Activated T-helper 1 cell treated with anti-CD3 and anti-CD28 coated beads, Interleukin-12 subunit alpha, Interleukin-12 subunit beta, Interleukin-2, Interleukin-4 antibody, amounts not matched to agents 30 ng/mL and 10 ng/mL and 1 ng/mL, durations not matched to agents 14 hours and 24 hours and 36 hours (primary cell): ENCODE measurements at regions of chr17 and their contacts with region 1.

Region 1: DNA sequence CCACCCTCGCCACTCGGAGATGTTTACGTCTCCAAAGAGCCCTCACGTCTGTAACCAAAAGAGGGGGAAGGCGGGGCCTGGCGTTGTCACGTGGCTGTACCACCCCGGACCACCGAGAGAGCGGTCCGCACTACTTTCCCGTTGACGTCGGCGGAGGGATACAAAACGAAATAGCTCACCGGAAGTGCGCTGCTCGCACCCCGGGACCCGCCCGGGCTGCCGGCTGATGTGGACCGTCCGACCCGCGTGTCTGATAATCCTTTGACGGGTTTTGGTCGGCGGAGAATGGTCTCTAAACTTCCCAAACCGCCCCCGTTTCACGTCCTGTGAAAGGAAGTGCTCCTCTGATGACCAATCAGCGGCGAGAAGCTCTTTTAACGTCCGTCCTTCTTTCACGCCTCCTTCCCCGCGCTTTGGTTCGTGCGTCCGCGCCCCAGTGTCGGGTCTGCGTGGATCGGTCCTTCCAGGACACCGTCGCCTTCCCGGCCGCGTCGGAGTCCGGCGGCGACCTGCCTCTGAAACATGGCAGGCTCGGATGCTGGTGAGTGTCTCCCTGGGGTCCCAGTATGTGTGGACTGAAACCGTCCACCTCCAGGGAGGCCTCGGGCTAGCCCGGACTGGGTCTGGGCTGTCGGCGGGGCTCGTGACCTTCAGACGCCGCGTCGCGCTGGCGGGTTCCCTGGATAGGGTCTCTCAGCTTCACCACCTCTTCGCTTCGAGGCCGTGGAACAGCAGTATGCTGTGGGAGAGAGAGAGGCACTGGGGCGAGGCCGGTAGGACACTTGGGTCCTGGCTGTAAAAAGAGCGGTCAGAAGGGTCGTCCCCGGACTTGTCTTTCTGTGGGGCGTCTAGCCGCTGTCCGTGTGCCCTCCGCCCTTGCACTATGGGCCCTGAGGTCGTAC is at the start of gene CEP95:
- DNase-seq: peak; percentile 93
- H3K4me3 Mint-ChIP-seq: peak within 1 kb of the TSS; percentile 97
- H3K27ac Mint-ChIP-seq: peak within 1 kb of the TSS; percentile 99
- H3K4me1 Mint-ChIP-seq: peaks cover 48% of the 10 kb centered on the region
- H3K27me3 Mint-ChIP-seq: no peaks in the 10 kb centered on the region
- total RNA-seq, gene CEP95: 42.4 and 46.4 TPM in 2 replicates

Region 2: DNA sequence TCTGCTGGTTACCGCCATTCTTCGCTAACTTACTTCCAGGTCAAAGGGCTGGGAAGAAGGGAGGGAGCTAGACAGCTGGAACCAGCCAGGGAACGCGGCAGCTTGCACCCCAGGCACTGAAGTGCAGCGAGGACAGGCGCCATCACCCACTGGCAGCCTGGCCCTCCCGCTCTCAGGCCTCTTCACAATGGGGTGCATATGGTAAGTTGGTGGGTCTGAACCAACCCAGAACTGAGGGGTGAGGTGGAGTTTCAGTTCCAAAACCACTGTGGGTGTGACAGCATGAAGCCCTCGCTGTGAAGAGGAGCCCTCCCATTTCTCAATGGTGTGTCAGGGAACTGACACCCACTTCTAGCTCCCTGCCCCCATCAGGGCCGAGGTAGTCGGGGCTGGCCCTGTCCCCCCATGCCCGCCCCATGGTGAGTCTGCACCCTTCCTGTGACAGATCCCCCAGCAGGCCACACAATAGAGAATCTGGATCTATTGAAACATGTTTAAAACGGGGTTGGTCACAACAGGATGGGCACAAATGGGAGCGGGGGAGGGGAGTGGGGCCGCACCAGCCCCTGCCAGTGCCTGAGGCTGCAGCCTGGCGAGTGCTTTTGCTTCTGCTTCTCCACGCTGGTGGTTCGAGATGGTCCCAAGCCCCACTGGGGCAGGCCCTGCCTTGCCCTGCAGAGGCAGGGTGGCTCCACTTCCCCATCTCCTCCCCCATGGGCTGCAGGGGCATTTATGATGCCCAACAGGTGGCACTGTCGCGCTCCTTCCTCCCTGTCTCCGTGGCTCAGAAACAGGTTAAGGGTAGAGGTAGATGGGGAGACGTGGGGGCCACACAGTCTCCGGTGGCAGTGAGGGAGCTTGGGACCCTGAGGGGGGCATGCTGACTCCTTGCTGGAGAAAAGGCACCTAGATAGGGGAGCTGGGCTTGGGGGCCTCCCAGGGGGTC is 809.2 kb before region 1 on chr17:
- intact Hi-C with region 1: loop called (anchors 2 kb)
- DNase-seq: peak; percentile 76
- H3K4me3 Mint-ChIP-seq: peak overlapping the region; percentile 96
- H3K27ac Mint-ChIP-seq: peak overlapping the region; percentile 96
- H3K4me1 Mint-ChIP-seq: peaks cover 53% of the 10 kb centered on the region
- H3K27me3 Mint-ChIP-seq: no peaks in the 10 kb centered on the region

Region 3: GRCh38 chr17:63842540-63843386 is 664.1 kb before region 1 on chr17 and contains the start of gene SMARCD2:
- intact Hi-C with region 1: loop called (anchors 2 kb)
- DNase-seq: peak; percentile 98
- H3K4me3 Mint-ChIP-seq: peak within 1 kb of the TSS; percentile 96
- H3K27ac Mint-ChIP-seq: peak within 1 kb of the TSS; percentile 91
- H3K4me1 Mint-ChIP-seq: peaks cover 39% of the 10 kb centered on the region
- H3K27me3 Mint-ChIP-seq: no peaks in the 10 kb centered on the region
- total RNA-seq, gene SMARCD2: 116 TPM in 2 replicates

Region 4: DNA sequence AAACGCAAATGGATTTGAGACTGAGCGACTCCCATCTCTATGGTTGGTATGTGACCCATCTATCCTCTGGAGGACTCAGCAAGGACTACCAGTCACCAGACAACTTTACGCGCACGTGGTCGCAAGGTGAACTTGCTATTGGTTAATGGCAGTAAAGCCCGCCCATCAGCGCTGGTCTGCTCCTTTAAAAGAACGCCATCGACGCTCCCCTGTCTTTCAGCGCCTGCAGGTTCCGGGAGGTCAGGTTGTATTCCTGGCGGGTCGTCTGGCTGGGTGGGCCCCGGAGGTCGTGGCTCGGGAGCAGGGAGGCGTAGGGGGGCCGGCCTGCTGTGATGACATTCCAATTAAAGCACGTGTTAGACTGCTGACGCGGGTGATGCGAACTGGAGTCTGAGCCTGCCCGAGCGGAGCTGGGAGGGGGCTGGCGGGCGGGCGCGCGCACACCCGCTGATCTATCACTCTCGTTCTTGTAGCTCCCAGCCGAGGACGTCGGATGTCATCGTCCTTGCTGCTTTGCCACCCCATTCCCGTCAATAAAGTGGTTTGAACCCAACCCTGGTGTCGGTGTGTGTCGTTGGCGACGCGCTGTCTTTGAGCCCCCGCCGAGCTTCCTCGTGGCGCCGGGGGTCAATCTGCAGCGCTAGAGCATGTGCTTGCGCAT is 360.9 kb before region 1 on chr17:
- intact Hi-C with region 1: loop called (anchors 5 kb)
- DNase-seq: peak; percentile 93
- H3K4me3 Mint-ChIP-seq: no peak overlapping the region
- H3K27ac Mint-ChIP-seq: no peak overlapping the region
- H3K4me1 Mint-ChIP-seq: peaks cover 19% of the 10 kb centered on the region
- H3K27me3 Mint-ChIP-seq: peaks cover 2% of the 10 kb centered on the region

Region 5: DNA sequence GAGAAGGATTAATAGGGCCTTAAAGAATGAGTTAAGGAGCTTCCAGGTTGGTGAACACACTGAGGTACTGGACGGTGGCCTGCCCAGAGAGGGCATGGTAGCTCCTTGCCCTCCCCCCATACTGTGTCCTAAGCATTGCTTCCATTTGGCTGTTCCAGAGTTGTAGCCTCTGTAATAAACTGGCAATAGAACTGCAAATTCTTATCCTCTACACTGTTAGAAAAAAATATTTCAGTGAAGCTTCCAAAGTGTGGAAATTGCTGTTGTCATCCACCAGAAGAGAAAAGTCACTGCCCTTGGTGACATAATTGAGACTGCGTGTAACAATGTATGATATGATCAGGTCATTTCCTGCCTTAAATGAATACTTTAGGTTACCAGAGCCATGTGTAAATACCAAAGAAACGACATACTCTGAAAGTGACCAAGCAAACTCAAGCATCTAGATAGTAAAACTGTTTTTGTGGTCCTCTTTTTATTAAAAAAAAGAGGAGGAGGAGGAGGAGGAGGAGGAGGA is 65.9 kb after region 1 on chr17:
- intact Hi-C with region 1: loop called (anchors 2 kb)
- DNase-seq: peak; percentile 3
- H3K4me3 Mint-ChIP-seq: peak overlapping the region; percentile 40
- H3K27ac Mint-ChIP-seq: peak overlapping the region; percentile 82
- H3K4me1 Mint-ChIP-seq: peaks cover 17% of the 10 kb centered on the region
- H3K27me3 Mint-ChIP-seq: no peaks in the 10 kb centered on the region

Region 6: GRCh38 chr17:64635647-64636307 is 128.9 kb after region 1 on chr17:
- intact Hi-C with region 1: loop called (anchors 1 kb)
- DNase-seq: no peak
- H3K4me3 Mint-ChIP-seq: no peak overlapping the region
- H3K27ac Mint-ChIP-seq: peak overlapping the region; percentile 98
- H3K4me1 Mint-ChIP-seq: peaks cover 21% of the 10 kb centered on the region
- H3K27me3 Mint-ChIP-seq: peaks cover 2% of the 10 kb centered on the region

Region 7: DNA sequence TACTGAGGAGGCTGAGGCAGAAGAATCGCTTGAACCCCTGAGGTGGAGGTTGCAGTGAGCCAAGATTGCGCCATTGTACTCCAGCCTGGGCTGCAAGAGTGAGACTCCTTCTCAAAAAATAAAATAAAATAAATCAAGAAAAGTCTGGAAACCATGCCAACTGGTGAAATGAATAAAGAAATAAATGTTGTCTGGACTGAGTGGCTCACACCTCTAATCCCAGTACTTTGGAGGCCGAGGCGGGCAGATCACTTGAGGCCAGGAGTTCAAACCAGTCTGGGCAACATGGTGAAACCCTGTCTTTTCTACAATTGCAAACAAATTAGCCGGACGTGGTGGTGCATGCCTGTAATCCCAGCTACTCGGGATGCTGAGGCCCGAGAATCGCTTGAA is 413.2 kb after region 1 on chr17:
- intact Hi-C with region 1: loop called (anchors 2 kb)
- DNase-seq: no peak
- H3K4me3 Mint-ChIP-seq: peak overlapping the region; percentile 89
- H3K27ac Mint-ChIP-seq: peak overlapping the region; percentile 87
- H3K4me1 Mint-ChIP-seq: peaks cover 21% of the 10 kb centered on the region
- H3K27me3 Mint-ChIP-seq: peaks cover 2% of the 10 kb centered on the region